ENCODE measurements at regions of chr10 and their contacts with region 1.

Region 1: DNA sequence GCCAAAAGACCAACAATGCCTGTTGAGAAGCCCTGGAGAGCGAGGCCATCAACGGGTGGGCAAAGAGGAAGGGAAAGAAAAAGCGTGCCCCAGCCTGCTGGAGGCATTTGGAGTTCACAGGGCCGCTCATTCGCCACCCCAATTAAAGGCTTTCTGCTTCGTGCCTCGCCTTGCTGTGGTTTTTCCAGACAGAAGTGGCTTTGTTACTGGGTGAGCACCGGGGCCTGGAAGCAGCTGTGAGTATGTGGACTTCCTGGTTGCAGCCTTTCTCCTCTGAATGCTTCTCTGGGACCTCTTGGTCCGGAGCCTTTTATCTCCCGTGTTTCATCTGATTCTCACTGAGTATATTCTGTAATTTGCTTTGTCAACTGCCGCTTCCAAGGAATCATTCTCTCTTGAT is 118.1 kb upstream of the EGR2 start:
- DNase-seq: no peak
- H3K4me3 ChIP-seq: no peak overlapping the region
- H3K27ac ChIP-seq: no peak overlapping the region
- H3K4me1 ChIP-seq: no peaks in the 10 kb centered on the region
- H3K27me3 ChIP-seq: no peaks in the 10 kb centered on the region
- CTCF ChIP-seq: no peak
- EP300 ChIP-seq: no peak
- POLR2A ChIP-seq: no peak

Region 2: DNA sequence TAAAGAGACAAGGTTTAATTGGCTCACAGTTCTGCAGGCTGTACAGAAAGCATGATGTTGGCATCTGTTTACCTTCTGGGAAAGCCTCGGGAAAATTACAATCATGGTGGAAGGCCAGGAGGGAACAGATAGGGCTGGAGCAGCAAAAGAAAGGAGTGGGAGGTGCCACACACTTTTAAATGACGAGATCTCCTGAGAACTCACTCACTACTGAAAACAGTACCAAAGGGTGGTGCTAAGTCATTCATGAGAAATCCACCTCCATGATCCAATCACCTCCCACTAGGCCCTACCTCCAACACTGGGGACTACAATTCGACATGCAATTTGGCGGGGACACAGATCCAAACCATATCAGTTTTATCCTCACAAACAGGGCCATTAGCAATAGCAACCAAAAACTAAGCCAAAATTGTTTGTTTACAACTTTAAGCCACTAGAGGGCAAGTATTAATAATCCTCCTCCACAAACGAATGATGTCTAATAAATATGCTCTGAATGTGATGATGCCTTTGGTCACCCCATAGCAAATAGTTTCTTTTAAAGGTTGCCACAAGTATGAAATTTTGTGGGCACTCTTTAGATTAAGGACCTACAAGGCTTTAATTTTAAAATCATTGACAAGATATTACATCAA is 69.7 kb after region 1 on chr10:
- intact Hi-C with region 1: no loop called
- DNase-seq: no peak
- H3K4me3 ChIP-seq: no peak overlapping the region
- H3K27ac ChIP-seq: no peak overlapping the region
- H3K4me1 ChIP-seq: no peaks in the 10 kb centered on the region
- H3K27me3 ChIP-seq: no peaks in the 10 kb centered on the region
- CTCF ChIP-seq: no peak
- EP300 ChIP-seq: no peak
- POLR2A ChIP-seq: no peak

Region 3: DNA sequence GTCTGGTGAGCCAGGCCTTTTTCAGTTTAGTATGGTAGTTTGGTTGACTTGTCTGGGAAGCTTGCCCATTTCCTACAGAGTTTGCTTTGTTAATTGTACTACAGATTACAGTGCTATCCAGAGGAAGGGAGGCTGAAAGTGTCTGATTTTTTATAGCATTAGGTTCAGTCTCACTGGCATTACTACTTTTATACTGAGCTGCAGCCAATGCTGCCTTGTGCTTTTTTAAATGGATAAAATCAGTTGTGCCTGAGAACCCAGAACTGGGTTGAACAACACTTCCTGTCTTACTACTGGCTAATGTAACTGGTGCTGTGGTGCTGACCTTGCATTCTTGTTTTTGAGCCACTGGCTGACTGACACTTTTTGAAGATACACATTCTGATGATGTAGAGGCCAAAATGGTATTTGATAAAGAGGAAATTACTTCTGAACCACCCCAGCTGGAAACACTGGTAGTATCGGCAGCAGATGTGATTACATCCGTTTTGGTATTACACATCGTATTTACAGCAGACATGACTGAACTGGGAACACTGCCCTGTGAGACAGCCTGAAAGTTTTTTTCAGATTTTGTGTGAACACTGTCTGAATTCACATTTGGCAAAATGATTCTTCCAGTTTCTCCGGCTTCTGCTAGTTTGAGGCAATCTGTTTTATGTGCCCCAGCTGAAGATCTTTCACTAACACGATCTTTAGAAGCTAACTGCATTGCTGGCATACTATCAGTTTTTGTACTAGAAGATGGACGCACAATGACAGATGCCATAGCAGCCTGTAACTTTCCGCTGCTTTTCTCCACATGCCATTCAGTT is 272.9 kb after region 1 on chr10:
- intact Hi-C with region 1: loop called in 1 of 4 experiments (anchors 10 kb)
- DNase-seq: peak in 3 of 5 donors; percentile 21 to 49 (median 46)
- H3K4me3 ChIP-seq: no peak overlapping the region
- H3K27ac ChIP-seq: peak overlapping the region in 1 of 2 donors; percentile 44
- H3K4me1 ChIP-seq: peaks cover 14% of the 10 kb centered on the region
- H3K27me3 ChIP-seq: no peaks in the 10 kb centered on the region
- CTCF ChIP-seq: no peak
- EP300 ChIP-seq: no peak
- POLR2A ChIP-seq: no peak

Measured in ovary (tissue), 10 donors.